Endothelial cell of umbilical vein (primary cell): ENCODE measurements at regions of chr12 and their contacts with region 1.

Region 1: GRCh38 chr12:104456417-104456949 is at the start of gene CHST11:
- DNase-seq: peak; percentile 95
- H3K4me3 ChIP-seq: peak within 1 kb of the TSS; percentile 64 to 76 (median 68)
- H3K27ac ChIP-seq: peak within 1 kb of the TSS; percentile 36
- H3K4me1 ChIP-seq: peaks cover 40% of the 10 kb centered on the region
- H3K27me3 ChIP-seq: no peaks in the 10 kb centered on the region
- CTCF ChIP-seq: peak; percentile 11 to 41
- POLR2A ChIP-seq: no peak
- total RNA-seq, gene CHST11: 20.9 and 24.2 TPM in 2 replicates

Region 2: GRCh38 chr12:104215638-104216297 is 240.7 kb before region 1 on chr12 and contains the start of gene TXNRD1:
- CTCF ChIA-PET with region 1: no interaction called
- POLR2A ChIA-PET with region 1: no interaction called
- dilution Hi-C with region 1: no loop called
- intact Hi-C with region 1: loop called (anchors 5 kb)
- DNase-seq: peak; percentile 85
- H3K4me3 ChIP-seq: peak within 1 kb of the TSS; percentile 42 to 64 (median 46)
- H3K27ac ChIP-seq: peak within 1 kb of the TSS; percentile 88
- H3K4me1 ChIP-seq: peaks cover 38% of the 10 kb centered on the region
- H3K27me3 ChIP-seq: no peaks in the 10 kb centered on the region
- CTCF ChIP-seq: peak; percentile 94 to 95
- POLR2A ChIP-seq: peak; percentile 65
- total RNA-seq, gene TXNRD1: 465 and 566 TPM in 2 replicates

Region 3: DNA sequence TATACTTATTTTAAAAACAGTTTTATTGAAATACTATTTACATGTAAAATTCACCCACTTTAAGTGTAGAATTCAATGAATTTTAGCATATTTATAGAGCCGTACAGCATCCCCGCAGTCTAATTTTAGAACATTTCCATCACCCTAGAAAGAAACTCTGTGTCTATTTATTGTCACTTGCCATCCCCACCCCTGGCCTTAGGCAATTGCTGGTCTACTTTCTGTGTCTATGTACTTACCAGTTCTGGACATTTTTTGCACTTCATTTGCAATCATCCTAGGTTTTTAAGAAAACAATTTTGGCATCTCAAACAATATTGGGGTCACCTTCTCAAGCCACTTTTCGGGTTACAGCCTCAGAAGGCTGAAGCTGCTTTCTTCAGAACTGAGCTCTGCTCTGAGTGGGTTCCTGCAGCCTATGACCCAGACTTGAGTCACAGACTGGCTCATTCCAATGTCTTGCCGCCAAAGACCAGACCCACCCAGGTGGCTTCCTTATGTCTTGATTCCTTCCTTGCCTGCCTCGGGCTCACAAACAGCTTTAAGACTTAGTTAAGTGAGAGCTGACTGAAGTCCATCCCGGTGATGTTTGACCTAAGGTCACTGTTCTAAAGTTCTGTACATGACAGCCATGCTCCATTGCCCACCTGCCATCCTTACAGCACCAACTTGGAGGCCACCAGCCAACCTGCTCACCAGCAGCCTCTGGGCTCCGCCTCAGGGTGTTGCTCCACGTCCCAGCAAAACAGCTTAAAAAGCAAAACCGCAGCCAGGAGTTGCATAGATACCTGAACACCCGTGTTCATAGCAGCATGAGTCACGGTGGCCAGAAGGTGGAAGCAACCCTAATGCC is 131.8 kb after region 1 on chr12:
- CTCF ChIA-PET with region 1: no interaction called
- POLR2A ChIA-PET with region 1: no interaction called
- dilution Hi-C with region 1: no loop called
- intact Hi-C with region 1: loop called (anchors 5 kb)
- DNase-seq: peak; percentile 59
- H3K4me3 ChIP-seq: no peak overlapping the region
- H3K27ac ChIP-seq: peak overlapping the region; percentile 49
- H3K4me1 ChIP-seq: peaks cover 13% of the 10 kb centered on the region
- H3K27me3 ChIP-seq: no peaks in the 10 kb centered on the region
- CTCF ChIP-seq: no peak
- POLR2A ChIP-seq: no peak

Region 4: GRCh38 chr12:104671407-104672098 is 215.1 kb after region 1 on chr12:
- CTCF ChIA-PET with region 1: interaction called, 5 read pairs
- POLR2A ChIA-PET with region 1: no interaction called
- dilution Hi-C with region 1: no loop called
- intact Hi-C with region 1: loop called (anchors 1 kb)
- DNase-seq: peak; percentile 94
- H3K4me3 ChIP-seq: no peak overlapping the region
- H3K27ac ChIP-seq: peak overlapping the region; percentile 36
- H3K4me1 ChIP-seq: peaks cover 19% of the 10 kb centered on the region
- H3K27me3 ChIP-seq: no peaks in the 10 kb centered on the region
- CTCF ChIP-seq: no peak
- POLR2A ChIP-seq: no peak

Region 5: DNA sequence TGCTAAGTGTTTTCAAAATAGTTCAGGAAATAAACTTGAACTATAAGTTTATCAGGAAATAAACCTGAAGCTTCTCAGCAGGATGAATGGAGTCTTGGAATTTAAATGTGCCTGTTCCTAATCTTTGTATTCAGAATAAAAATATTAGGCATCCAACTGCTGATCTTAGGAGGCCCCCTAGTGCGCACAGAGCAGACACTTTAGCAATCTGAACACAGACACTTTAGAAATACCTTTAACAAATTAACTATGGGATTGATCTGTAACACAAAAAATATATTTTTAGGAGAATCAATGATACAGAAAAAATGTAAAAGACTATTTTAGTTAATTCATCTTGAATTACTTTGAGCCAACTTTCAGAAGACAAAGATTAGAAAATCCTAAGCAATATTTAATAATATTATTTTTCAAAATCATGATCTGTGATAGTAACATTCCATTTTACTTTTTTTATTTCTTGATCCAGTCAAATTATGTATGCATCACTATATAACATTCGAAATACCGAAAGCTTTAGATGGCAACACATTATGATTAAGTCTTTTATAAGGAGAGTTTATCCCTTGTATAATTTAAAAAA is 420.7 kb after region 1 on chr12:
- CTCF ChIA-PET with region 1: interaction called, 3 read pairs
- POLR2A ChIA-PET with region 1: no interaction called
- dilution Hi-C with region 1: no loop called
- intact Hi-C with region 1: loop called (anchors 2 kb)
- DNase-seq: peak; percentile 63
- H3K4me3 ChIP-seq: no peak overlapping the region
- H3K27ac ChIP-seq: no peak overlapping the region
- H3K4me1 ChIP-seq: no peaks in the 10 kb centered on the region
- H3K27me3 ChIP-seq: no peaks in the 10 kb centered on the region
- CTCF ChIP-seq: peak; percentile 27 to 50
- POLR2A ChIP-seq: no peak

Region 6: GRCh38 chr12:105053116-105053572 is 596.7 kb after region 1 on chr12:
- CTCF ChIA-PET with region 1: interaction called, 7 read pairs
- POLR2A ChIA-PET with region 1: no interaction called
- dilution Hi-C with region 1: no loop called
- intact Hi-C with region 1: loop called (anchors 2 kb)
- DNase-seq: peak; percentile 86
- H3K4me3 ChIP-seq: no peak overlapping the region
- H3K27ac ChIP-seq: no peak overlapping the region
- H3K4me1 ChIP-seq: no peaks in the 10 kb centered on the region
- H3K27me3 ChIP-seq: no peaks in the 10 kb centered on the region
- CTCF ChIP-seq: peak; percentile 80 to 81
- POLR2A ChIP-seq: no peak